ENCODE measurements at regions of chrX and their contacts with region 1.

Region 1: DNA sequence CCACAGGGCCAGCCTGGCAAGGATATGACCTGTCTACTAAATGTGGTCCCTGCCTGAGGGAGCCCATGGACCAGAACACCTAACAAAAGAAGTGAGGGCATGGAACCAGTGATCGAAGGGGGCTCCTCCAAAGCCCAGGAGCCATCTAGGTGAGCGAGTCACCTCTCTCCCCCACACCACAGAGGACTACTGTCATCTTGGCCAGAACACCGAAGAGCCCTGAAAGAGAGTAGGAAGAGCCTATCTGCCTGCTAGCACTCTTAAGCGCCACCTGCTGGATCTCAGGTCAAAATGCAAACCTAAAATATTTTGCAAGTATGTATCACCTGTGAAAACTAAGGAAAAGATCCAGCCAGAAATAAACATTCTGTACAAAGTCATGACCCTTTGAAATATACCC is 137.9 kb upstream of the ZXDB start:
- DNase-seq: no peak
- ATAC-seq: peak in 1 of 4 donors; percentile 33
- H3K4me3 ChIP-seq: no peak overlapping the region
- H3K27ac ChIP-seq: no peak overlapping the region
- H3K4me1 ChIP-seq: no peaks in the 10 kb centered on the region
- H3K27me3 ChIP-seq: no peaks in the 10 kb centered on the region
- CTCF ChIP-seq: peak; percentile 16 to 51 (median 38)
- POLR2A ChIP-seq: no peak

Region 2: DNA sequence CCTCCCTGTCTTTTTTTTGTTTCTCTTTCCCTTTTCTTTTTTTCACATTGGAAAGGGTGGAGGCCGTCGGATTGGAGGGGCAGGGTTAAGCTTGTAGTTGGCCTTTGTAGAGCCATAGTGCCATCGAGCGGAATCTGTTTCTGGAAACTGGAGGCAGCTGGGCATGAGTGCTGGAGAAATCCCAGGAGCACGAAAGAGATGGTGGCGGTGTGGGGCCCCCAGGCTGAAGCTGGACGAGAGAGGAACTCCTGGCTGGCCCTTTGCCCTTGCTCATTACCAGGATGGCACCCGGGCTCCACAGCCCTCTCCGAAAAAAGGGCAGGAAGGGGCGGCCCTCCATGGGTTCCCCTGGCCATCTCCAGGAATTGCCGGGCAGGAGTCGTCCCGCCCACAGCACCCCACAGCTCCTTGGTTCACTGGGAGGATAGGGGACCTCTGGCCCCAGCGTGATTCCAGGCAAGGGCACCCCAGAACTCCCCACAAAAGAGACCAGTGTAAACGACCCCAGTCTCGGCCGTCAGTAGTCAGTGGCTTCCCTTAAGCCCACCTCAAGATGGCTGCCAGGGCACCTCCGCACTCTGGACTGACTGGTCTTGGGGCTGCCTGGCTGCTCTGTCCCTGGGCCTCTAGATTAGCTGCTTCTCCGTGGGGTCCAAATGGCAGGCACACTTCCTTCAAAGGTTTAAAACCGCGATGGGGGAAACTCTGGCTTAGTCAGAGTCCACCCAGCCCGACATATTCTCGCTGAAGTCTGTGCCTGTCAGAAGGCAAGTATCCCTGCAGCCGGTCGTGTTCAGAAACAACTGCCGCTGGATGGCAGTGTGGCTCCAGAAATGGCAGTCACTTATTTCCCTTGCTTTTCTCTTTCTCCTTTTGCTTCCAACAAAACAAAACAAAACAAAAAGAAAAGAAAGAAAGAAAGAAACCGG is 650.7 kb before region 1 on chrX:
- intact Hi-C with region 1: loop called in 2 of 10 experiments (anchors 10 kb)
- DNase-seq: peak; percentile 23 to 82 (median 65)
- ATAC-seq: peak; percentile 42 to 88 (median 80)
- H3K4me3 ChIP-seq: peak overlapping the region in 9 of 12 donors; percentile 4 to 67 (median 21)
- H3K27ac ChIP-seq: peak overlapping the region in 5 of 12 donors; percentile 66 to 83 (median 70)
- H3K4me1 ChIP-seq: peaks cover 0 to 22% (median 1%) of the 10 kb centered on the region in 12 donors
- H3K27me3 ChIP-seq: no peaks in the 10 kb centered on the region
- CTCF ChIP-seq: peak in 11 of 12 donors; percentile 14 to 62 (median 47)
- POLR2A ChIP-seq: no peak

Region 3: DNA sequence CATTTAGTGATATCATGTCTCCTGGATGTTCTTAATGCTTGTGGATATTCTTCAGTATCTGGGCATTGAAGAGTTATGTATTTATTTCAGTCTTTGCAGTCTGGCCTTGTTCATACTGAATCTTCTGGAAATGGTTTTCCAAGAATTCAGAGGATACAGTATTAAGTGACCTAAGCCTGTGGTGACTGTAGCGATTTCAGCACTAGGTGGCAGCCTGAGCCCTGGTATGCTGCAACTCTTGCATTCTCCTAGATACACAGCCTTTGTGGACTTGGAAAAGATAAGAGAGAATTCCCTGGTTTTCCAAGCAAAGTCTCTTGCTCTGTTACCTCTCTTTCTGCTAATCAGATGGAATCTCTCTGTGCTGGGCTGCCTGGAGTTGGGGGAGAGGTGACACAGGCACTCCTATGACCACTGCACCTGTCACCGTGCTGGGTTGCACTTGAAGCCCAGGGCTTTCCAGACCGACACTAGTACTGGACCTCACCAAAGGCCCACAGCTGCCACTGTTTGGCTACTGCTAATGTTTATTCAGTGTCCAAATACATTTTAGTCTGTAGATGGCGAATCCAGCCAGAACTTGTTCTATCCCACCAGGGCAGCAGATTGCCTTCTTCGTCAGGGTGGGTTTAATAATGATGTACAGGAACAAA is 297.4 kb before region 1 on chrX:
- intact Hi-C with region 1: loop called in 7 of 10 experiments (anchors 2 to 10 kb)
- DNase-seq: peak in 1 of 5 donors; percentile 17
- ATAC-seq: peak in 3 of 4 donors; percentile 61 to 71 (median 69)
- H3K4me3 ChIP-seq: no peak overlapping the region
- H3K27ac ChIP-seq: no peak overlapping the region
- H3K4me1 ChIP-seq: no peaks in the 10 kb centered on the region
- H3K27me3 ChIP-seq: peaks cover 0 to 3% (median 0%) of the 10 kb centered on the region in 9 donors
- CTCF ChIP-seq: peak; percentile 17 to 51 (median 32)
- POLR2A ChIP-seq: no peak

Measured in heart left ventricle (tissue), 16 donors.